Cardiac septum (tissue), 1 donor: ENCODE measurements at regions of chr6 and their contacts with region 1.

Region 1: DNA sequence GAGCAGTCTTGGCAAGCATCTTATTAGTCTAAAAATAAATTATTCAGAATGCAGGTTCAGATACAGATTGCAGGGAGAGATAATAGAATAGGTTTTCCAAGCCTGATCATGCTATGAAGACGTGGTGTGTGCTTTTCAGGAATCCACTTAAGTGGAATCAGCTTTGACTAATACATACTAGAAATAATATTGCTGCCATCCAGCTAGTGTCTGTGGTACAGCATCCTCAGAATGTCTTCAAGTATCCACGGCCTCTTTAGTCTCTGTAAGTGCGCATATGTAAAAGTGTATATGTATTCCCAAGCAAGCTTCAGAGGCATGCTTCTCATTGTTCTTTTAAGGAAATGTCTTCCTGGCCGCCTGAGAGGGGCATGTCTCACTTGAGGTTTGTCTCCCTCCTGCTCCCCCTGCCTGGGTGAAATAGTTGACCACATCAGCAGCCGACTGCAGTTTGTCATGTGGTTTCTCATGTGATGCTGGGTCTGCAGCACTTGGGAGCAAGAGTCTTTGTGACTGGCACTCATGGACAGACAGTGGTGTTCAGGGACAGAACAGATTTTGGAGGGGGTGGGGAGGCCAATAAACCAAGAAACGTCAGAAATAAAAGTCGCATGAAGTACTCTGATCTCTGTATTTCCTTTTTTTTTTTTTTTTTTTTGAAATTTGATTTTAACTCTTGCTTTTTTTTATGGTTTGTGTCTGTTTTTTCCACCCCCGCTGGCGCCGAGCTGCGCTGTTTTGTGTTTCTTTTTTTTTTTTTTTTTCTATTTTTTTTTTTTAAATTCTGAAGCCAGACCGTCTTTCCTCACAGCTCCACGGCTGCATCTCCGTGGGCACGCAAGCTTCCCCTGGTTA is 150.8 kb downstream of the PRL start:
- DNase-seq: no peak

Region 2: DNA sequence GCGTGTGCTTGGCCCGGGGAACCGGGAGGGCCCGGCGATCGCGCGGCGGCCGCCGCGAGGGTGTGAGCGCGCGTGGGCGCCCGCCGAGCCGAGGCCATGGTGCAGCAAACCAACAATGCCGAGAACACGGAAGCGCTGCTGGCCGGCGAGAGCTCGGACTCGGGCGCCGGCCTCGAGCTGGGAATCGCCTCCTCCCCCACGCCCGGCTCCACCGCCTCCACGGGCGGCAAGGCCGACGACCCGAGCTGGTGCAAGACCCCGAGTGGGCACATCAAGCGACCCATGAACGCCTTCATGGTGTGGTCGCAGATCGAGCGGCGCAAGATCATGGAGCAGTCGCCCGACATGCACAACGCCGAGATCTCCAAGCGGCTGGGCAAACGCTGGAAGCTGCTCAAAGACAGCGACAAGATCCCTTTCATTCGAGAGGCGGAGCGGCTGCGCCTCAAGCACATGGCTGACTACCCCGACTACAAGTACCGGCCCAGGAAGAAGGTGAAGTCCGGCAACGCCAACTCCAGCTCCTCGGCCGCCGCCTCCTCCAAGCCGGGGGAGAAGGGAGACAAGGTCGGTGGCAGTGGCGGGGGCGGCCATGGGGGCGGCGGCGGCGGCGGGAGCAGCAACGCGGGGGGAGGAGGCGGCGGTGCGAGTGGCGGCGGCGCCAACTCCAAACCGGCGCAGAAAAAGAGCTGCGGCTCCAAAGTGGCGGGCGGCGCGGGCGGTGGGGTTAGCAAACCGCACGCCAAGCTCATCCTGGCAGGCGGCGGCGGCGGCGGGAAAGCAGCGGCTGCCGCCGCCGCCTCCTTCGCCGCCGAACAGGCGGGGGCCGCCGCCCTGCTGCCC is 551.4 kb before region 1 on chr6:
- intact Hi-C with region 1: loop called (anchors 5 kb)
- DNase-seq: peak; percentile 84

Region 3: GRCh38 chr6:21846541-21847451 is 299.3 kb before region 1 on chr6:
- intact Hi-C with region 1: loop called (anchors 5 kb)
- DNase-seq: no peak

Region 4: GRCh38 chr6:21946298-21946783 is 199.7 kb before region 1 on chr6:
- intact Hi-C with region 1: loop called (anchors 5 kb)
- DNase-seq: no peak

Region 5: GRCh38 chr6:22164236-22164635 is 18.2 kb after region 1 on chr6:
- intact Hi-C with region 1: loop called (anchors 1 kb)
- DNase-seq: no peak

Region 6: DNA sequence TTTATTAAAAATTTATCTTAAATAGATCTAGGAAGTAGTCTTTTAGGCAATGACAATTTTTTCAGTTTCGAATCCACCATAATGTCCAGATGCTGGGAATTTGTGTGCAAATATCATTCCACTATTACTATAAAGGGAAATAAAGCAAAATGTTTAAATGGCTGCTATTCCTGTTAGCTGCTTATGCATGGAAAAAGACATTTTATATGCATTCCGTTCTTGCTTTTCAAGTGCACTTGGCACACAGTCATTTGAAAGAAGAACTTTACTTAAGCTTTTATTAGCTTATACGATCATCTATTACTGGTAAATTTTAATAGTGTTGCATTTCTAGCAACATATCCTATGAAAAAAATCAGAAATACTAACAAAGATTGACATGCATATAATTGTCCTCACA is 108.8 kb after region 1 on chr6:
- intact Hi-C with region 1: no loop called
- DNase-seq: no peak

Region 7: GRCh38 chr6:22471132-22471690 is 325.2 kb after region 1 on chr6:
- intact Hi-C with region 1: loop called (anchors 10 kb)
- DNase-seq: no peak

Region 8: DNA sequence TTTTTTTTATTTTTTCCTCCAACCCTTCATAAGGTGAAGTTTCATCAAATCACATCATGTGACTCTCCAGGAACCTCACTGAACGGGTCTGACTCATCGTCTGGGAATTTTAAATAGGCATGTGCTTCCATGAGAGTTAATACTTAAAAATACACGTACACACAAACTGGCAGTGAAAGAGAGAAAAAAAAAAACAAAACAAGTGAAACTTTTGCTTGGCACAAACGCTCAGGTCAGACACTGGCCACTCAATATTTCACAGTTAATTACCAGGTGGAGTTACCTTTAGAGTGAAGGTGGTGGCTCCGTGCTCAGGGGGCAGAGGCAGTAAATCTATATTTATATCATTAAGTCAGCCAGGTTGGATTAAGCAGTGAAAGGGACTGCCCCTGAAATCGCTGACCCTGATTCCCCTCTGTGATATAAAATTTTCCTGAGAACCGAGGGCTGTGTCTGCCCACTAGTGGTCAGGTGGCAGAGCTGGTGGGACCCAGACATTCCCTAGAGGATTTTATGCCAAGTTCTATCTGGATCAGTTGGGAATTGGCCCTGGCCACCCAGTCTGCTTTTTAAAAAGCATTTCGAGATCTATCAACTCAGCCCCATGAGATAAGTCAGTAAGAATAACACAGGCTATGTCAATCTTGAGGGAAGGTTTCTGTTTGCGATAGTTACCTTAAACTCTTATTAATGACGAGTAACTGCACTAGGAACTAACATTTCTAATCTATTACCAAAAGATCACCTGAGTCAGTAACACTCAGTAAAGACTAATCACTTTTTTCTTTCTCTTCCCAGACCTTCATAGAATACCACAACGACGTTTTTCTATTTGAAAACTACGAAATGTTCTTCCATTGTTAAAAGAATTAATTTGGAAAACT is 682.4 kb after region 1 on chr6:
- intact Hi-C with region 1: loop called (anchors 5 kb)
- DNase-seq: no peak